ENCODE measurements at regions of chr11 and their contacts with region 1.

Region 1: DNA sequence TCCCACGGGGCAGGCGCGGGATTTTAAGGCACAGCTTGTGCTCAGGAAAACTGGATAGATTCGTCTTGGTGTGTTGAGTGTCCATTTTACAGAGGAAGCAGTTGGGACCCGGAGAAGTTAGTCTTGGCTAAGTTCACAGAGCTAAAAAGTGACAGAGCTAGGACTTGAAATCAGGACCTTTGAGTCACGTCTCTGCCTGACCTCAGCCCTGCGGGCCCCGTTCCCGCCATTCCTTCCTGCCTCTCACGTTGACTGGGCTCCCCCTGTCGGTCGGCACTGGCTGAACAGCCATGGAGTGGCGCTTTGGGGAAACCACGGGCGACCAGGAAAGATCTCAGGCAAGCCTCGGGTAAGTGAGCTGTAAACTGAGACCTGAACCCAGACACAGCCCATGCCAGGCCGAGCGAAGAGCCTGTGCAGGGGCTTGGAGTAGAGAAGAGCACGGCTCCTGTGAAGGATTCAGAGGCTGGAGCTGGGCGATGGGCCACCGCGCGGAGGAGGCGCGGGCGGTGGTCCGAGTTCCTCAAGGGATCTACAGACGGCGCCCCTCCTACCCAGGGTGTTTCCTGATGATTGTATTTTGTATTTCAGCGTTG is 54.1 kb downstream of the WNT11 start:
- DNase-seq: peak; percentile 79 to 86 (median 83)
- H3K4me3 ChIP-seq: peak overlapping the region; percentile 34 to 77 (median 74)
- H3K27ac ChIP-seq: no peak overlapping the region
- H3K4me1 ChIP-seq: peaks cover 0 to 18% (median 12%) of the 10 kb centered on the region in 4 experiments
- H3K27me3 ChIP-seq: peaks cover 0 to 2% (median 0%) of the 10 kb centered on the region in 5 experiments

Region 2: GRCh38 chr11:75896843-75897419 is 255.3 kb before region 1 on chr11:
- CTCF ChIA-PET with region 1: interaction called, 73 read pairs
- POLR2A ChIA-PET with region 1: interaction called, 3 read pairs
- DNase-seq: peak; percentile 48 to 68 (median 65)
- H3K4me3 ChIP-seq: no peak overlapping the region
- H3K27ac ChIP-seq: no peak overlapping the region
- H3K4me1 ChIP-seq: peaks cover 7 to 27% (median 11%) of the 10 kb centered on the region in 4 experiments
- H3K27me3 ChIP-seq: no peaks in the 10 kb centered on the region

Measured in common myeloid progenitor, CD34-positive (primary cell).